Transverse colon (tissue), 4 donors: ENCODE measurements at regions of chr5 and their contacts with region 1.

Region 1: GRCh38 chr5:53469946-53470687 is 10.3 kb upstream of the FST start:
- DNase-seq: no peak
- H3K4me3 ChIP-seq: no peak overlapping the region
- H3K27ac ChIP-seq: no peak overlapping the region
- H3K4me1 ChIP-seq: no peaks in the 10 kb centered on the region
- H3K27me3 ChIP-seq: peaks cover 23% of the 10 kb centered on the region
- CTCF ChIP-seq: no peak
- EP300 ChIP-seq: no peak
- POLR2A ChIP-seq: no peak

Region 2: DNA sequence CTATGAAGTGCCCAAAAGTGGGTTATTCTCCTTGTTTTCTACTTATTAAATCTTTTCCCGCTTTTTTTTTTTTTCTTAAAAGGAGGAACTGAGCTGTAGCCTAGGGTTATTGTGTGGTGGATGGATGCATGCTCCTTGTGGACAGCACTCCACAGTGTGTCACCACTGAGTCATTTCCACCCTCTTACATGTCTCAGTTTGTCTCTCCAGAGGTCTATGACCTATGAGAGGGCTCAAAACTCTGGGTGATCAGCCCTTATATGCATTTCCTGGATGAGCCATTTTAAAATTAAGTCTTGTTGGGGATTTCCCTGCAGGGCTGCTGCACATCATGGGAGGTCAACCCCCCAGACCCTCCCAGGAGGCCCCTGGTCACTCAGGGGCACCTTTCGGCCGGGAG is 258.3 kb before region 1 on chr5:
- in situ Hi-C with region 1: no loop called
- intact Hi-C with region 1: no loop called
- DNase-seq: no peak
- H3K4me3 ChIP-seq: no peak overlapping the region
- H3K27ac ChIP-seq: no peak overlapping the region
- H3K4me1 ChIP-seq: no peaks in the 10 kb centered on the region
- H3K27me3 ChIP-seq: no peaks in the 10 kb centered on the region
- CTCF ChIP-seq: no peak
- EP300 ChIP-seq: no peak
- POLR2A ChIP-seq: no peak

Region 3: DNA sequence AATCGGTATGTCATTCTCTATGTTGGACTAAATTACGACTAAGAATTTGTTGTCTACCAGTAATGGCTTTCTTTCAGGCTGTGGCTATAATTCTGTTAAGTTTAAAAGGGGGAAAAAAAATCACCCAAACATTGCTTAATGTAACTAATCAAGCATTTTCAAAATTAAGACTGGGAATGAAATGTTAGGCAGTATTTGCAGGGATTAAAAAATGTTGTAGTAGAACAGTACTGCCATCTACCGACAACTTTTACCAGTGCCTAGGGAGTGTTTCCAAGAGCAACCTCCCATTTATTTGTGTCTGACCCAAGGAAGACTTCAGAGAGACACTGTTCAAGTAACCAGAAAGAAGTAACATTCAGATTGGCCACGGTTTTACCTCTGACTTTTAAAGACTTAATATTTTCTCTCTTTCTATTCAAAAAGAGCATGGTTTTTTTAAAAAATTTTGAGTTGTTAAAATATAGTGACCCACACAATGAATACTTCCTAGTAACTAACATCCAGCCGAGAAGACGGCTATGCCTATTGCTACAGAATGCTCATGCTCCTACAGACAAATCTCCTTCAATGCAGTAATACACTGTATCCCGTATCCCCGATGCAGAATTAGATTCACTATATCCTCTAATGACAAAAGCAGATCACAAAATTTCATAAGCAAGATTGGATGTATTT is 747.8 kb after region 1 on chr5:
- in situ Hi-C with region 1: loop called in 1 of 4 experiments (anchors 25 kb)
- intact Hi-C with region 1: no loop called
- DNase-seq: no peak
- H3K4me3 ChIP-seq: no peak overlapping the region
- H3K27ac ChIP-seq: peak overlapping the region in 2 of 4 donors; percentile 23 to 78
- H3K4me1 ChIP-seq: peaks cover 0 to 12% (median 0%) of the 10 kb centered on the region in 4 donors
- H3K27me3 ChIP-seq: no peaks in the 10 kb centered on the region
- CTCF ChIP-seq: peak; percentile 71 to 87 (median 77)
- EP300 ChIP-seq: no peak
- POLR2A ChIP-seq: no peak